HEK293 (cell line): ENCODE measurements at regions of chr9 and their contacts with region 1.

Region 1: DNA sequence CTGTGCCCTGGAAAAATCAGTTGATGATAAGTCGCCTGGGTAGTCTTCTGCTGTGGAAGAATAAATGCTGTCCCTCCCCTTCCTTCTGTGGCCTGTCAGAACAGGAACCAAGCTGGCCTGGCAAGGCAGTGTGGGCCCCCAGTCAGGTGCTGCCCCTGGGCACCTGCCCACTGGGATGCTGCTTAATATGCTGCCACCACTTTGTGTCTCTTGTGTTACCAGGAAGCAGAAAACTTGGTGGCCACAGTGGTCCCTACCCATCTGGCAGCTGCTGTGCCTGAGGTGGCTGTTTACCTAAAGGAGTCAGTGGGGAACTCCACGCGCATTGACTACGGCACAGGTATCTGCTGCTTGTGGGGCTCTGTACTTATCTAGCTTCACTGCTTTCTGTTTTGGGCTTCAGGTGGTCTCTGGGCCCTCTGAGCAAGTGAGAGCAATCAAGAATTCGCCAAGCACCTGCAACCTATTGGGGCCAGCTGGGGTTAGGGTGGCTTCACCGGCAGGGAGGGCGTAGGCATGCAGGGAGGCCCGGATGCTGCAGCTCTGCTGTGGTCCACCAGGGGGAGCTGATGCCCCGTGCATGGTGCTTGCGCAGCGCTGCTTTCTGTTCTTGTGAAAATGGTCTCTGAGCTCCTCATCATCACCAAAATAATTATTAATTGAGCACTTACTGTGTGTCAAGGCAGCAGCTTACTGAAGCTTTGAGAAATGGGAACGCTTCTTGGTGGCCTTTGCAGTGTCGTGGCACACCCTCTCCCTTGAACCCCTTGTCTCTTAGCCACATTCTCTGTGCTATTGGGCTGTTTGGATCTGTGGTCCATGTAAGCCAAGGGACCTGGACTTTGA is 20.3 kb downstream of the PTPA start:
- H3K4me3 ChIP-seq: no peak overlapping the region
- H3K27ac ChIP-seq: no peak overlapping the region
- H3K4me1 ChIP-seq: no peaks in the 10 kb centered on the region
- CTCF ChIP-seq: peak; percentile 86

Region 2: GRCh38 chr9:128677794-128678193 is 453.7 kb before region 1 on chr9:
- CTCF ChIA-PET with region 1: no interaction called
- POLR2A ChIA-PET with region 1: no interaction called
- H3K4me3 ChIP-seq: no peak overlapping the region
- H3K27ac ChIP-seq: no peak overlapping the region
- H3K4me1 ChIP-seq: no peaks in the 10 kb centered on the region
- CTCF ChIP-seq: no peak

Region 3: GRCh38 chr9:129110740-129111527 is 20.6 kb before region 1 on chr9 and contains the starts of genes CRAT and PTPA:
- CTCF ChIA-PET with region 1: interaction called, 24 read pairs
- POLR2A ChIA-PET with region 1: interaction called, 3 read pairs
- H3K4me3 ChIP-seq: peak within 1 kb of the TSS; percentile 97
- H3K27ac ChIP-seq: peak within 1 kb of the TSS; percentile 87
- H3K4me1 ChIP-seq: peaks cover 4% of the 10 kb centered on the region; the same call in 1 of the 2 replicates
- CTCF ChIP-seq: no peak

Region 4: GRCh38 chr9:129121483-129121882 is 10.0 kb before region 1 on chr9:
- CTCF ChIA-PET with region 1: interaction called, 29 read pairs
- POLR2A ChIA-PET with region 1: no interaction called
- H3K4me3 ChIP-seq: no peak overlapping the region
- H3K27ac ChIP-seq: no peak overlapping the region
- H3K4me1 ChIP-seq: no peaks in the 10 kb centered on the region
- CTCF ChIP-seq: no peak

Region 5: DNA sequence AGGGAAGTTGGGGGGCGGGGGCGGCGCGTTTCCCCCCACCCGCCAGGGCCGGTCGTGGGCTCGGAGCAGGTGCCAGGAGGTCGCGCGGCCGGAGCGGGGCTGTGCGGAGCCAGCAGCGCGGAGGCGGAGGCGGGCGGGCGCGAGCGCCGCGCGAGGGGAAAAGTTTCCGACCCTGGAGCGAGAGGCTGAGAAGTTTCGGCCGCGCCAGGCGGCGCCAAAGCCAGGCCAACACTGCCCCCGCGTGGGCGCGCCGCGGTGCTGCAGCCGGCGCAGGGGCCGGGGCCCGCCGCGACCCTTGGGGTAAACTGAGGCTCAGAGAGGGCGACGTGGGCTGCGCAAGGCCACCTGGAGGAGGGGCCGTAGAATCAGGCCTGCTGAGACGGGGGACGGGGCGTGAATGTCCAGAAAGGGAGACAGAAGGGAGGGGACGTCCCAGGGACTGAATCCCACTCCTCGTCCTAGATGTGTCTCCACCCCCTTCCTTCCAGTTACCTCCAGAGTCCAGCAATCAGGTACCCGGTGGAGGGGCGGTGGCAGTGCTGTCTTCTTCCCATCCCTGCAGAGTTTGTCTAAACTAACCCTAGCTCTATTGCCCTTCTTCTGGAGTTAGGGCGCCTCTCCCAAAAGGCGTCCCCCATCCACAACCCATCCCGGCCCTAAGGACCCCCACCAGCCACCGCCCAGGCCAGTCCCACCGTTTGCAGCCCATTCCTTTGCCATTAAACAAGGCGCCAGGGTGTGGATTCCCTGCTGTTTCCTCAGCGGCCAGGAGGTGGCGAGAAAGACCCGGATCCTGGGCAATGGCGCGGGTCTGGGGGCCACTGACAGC is 479.2 kb after region 1 on chr9:
- CTCF ChIA-PET with region 1: interaction called, 507 read pairs
- POLR2A ChIA-PET with region 1: interaction called, 4 read pairs
- H3K4me3 ChIP-seq: peak overlapping the region; percentile 44
- H3K27ac ChIP-seq: peak overlapping the region; percentile 49; the same call in 1 of the 2 replicates
- H3K4me1 ChIP-seq: no peaks in the 10 kb centered on the region; the same call in 1 of the 2 replicates
- CTCF ChIP-seq: peak; percentile 76; the same call in 1 of the 2 replicates

Region 6: GRCh38 chr9:129796029-129796910 is 664.7 kb after region 1 on chr9:
- CTCF ChIA-PET with region 1: interaction called, 16 read pairs
- POLR2A ChIA-PET with region 1: no interaction called
- H3K4me3 ChIP-seq: no peak overlapping the region
- H3K27ac ChIP-seq: no peak overlapping the region
- H3K4me1 ChIP-seq: no peaks in the 10 kb centered on the region
- CTCF ChIP-seq: no peak